ENCODE measurements at regions of chr1 and their contacts with region 1.

Region 1: GRCh38 chr1:201391651-201392511 is 7.2 kb downstream of the LAD1 start:
- DNase-seq: no peak
- ATAC-seq: no peak
- H3K4me3 ChIP-seq: no peak overlapping the region
- H3K27ac ChIP-seq: no peak overlapping the region
- H3K4me1 ChIP-seq: peaks cover 10 to 34% of the 10 kb centered on the region in 2 experiments
- H3K27me3 ChIP-seq: no peaks in the 10 kb centered on the region
- CTCF ChIP-seq: no peak
- POLR2A ChIP-seq: no peak
- RAD21 ChIP-seq: no peak

Region 2: GRCh38 chr1:201376464-201377374 is 15.2 kb before region 1 on chr1:
- CTCF ChIA-PET with region 1: interaction called, 10 read pairs
- POLR2A ChIA-PET with region 1: no interaction called
- RAD21 ChIA-PET with region 1: no interaction called
- intact Hi-C with region 1: no loop called
- DNase-seq: peak; percentile 59
- ATAC-seq: peak; percentile 86
- H3K4me3 ChIP-seq: no peak overlapping the region
- H3K27ac ChIP-seq: no peak overlapping the region
- H3K4me1 ChIP-seq: peaks cover 5 to 25% of the 10 kb centered on the region in 2 experiments; a peak in 3 of 4 replicates
- H3K27me3 ChIP-seq: peaks cover 8% of the 10 kb centered on the region; the same call in 1 of the 2 replicates
- CTCF ChIP-seq: peak; percentile 45 to 93 (median 86); a peak in 5 of 6 replicates
- POLR2A ChIP-seq: no peak
- RAD21 ChIP-seq: peak; percentile 46